ENCODE measurements at regions of chr1 and their contacts with region 1.

Region 1: DNA sequence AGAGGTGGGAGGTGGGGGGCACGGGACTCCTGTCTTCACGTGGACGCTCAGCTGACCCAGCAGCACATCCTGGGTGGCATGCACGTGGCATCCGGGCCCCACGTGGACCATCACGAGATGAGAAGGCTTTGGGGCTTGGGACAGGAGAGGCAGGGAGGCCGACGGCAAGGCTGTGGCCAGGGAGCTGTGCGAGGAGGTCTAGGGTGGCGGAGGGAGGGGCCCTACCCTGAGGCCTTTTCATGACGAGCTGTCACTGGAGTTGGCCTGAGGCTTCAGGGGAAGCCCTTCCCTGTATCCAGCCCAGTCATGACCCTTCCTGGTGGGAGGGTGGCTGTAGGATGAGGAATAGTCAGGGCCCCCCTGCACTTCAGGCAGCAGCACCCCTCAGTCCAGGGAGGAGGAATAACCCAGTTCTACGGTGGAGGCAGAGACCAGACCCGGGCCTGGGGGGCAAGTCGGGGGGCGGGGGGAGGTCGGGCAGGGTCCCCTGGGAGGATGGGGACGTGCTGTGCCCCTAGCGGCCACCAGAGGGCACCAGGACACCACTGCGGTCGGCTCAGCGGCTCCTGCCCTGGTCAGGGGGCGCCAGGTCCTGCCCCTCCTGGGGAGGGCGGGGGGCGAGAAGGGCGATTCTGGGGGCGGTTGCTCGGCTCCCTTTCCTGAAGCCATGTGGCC is 2.0 kb upstream of the PERM1 start:
- DNase-seq: peak; percentile 73
- ATAC-seq: peak; percentile 93
- H3K4me3 Mint-ChIP-seq: no peak overlapping the region
- H3K27ac Mint-ChIP-seq: no peak overlapping the region
- H3K4me1 Mint-ChIP-seq: no peaks in the 10 kb centered on the region
- H3K27me3 Mint-ChIP-seq: peaks cover 27% of the 10 kb centered on the region
- CTCF ChIP-seq: peak; percentile 99

Region 2: DNA sequence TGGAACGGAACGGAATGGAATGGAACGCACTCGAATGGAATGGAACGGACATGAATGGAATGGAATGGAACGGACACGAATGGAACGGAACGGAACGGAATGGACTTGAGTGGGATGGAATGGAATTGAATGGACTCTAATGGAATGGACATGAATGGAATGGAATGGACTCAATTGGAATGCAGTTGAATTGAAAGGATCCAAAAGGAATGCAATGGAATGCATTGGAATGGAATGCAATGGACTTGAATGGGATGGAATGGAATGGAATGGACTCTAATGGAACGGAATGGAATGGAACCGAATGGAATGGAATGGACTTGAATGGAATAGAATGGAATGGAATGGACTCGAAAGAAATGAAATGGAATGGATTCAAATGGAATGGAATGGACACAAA is 195.1 kb before region 1 on chr1:
- CTCF ChIA-PET with region 1: no interaction called
- POLR2A ChIA-PET with region 1: no interaction called
- intact Hi-C with region 1: no loop called
- DNase-seq: no peak
- ATAC-seq: no peak
- H3K4me3 Mint-ChIP-seq: no peak overlapping the region
- H3K27ac Mint-ChIP-seq: no peak overlapping the region
- H3K4me1 Mint-ChIP-seq: no peaks in the 10 kb centered on the region
- H3K27me3 Mint-ChIP-seq: no peaks in the 10 kb centered on the region
- CTCF ChIP-seq: no peak

Region 3: GRCh38 chr1:995665-996633 is 12.0 kb after region 1 on chr1:
- CTCF ChIA-PET with region 1: interaction called, 37 read pairs
- POLR2A ChIA-PET with region 1: interaction called, 4 read pairs
- intact Hi-C with region 1: no loop called
- DNase-seq: no peak
- ATAC-seq: no peak
- H3K4me3 Mint-ChIP-seq: no peak overlapping the region
- H3K27ac Mint-ChIP-seq: no peak overlapping the region
- H3K4me1 Mint-ChIP-seq: peaks cover 26% of the 10 kb centered on the region
- H3K27me3 Mint-ChIP-seq: peaks cover 28% of the 10 kb centered on the region
- CTCF ChIP-seq: no peak

Region 4: DNA sequence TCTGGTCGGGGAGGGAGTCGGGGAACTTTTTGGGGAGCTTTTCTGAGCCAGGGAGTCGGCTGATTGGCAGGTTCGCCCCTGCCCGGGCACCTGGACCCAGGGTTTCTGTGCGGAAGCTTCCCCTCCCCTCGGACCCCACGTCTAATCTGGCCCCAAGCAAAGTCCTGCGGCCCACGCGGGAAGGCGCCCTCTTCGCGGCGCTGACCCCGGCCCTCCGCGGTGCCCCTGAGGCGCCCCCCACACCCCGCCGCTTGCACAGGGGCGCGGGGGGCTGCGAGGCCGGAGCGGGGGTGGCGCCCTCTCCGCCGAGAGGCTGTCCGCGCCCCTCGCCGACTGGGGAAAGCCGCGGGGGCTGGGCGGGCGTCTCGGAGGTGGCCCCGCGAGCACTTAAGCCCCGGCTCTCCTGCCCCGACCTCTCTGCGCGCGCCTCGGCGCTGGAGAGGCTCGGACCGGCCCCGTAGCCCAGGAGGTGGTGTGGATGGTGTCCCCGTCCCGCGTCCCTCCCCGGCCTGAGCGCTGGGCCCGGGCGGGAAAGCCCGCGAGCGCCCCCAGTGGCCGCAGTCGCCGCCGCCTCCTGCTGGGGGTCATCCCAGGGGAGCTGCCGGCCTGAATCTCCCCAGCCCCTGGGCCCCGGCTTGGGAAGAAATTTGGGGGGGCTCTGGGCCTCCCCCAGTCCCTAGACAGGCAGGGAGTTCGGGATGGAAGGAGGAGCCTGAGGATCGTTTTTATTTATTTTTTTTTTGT is 17.7 kb after region 1 on chr1:
- CTCF ChIA-PET with region 1: interaction called, 37 read pairs
- POLR2A ChIA-PET with region 1: interaction called, 3 read pairs
- intact Hi-C with region 1: no loop called
- DNase-seq: peak; percentile 76
- ATAC-seq: peak; percentile 57
- H3K4me3 Mint-ChIP-seq: peak overlapping the region; percentile 65
- H3K27ac Mint-ChIP-seq: no peak overlapping the region
- H3K4me1 Mint-ChIP-seq: peaks cover 15% of the 10 kb centered on the region
- H3K27me3 Mint-ChIP-seq: peaks cover 41% of the 10 kb centered on the region
- CTCF ChIP-seq: peak; percentile 97

Region 5: DNA sequence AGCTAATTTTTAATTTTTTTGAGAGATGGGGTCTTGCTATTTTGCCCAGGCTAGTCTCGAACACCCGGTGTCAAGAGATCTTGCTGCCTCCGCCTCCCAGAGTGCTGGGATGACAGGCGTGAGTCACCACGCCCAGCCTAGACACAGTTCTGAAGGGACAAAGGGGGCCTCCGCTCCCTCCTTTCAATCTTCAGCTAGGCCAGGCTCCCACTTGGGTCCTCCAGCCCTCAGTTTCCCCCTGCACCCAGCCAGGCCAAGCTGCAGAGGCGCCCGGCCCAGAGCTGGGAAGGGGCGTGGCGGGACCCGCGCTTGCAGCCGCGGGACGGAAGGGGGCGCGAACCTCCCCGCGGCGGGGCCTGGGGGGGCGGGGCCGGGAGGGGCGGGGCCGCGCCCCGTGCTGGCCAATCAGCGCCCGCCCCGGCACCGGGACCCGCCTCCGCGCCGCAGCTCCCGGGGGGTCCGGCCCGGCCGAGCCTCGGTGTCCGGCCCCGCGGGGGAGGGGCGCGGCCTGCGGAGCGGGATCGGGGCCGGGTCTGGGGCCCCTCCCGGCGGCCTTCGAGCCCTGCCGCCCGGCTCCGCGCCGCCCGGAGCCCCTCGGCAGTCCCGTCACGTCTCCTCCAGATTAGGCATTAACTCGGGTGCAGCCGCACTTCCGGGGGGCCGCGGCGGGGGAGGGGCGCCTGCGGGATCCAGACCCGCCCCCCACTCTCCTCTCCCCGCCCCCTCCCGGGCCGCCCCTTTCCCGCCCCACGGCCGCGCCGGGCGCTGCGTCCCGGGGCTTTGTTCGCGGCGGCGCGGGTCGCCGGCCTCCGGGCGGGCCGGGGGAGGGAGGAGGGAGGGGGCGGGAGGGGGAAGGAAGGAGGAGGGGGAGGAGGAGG is 35.4 kb after region 1 on chr1:
- CTCF ChIA-PET with region 1: interaction called, 15 read pairs
- POLR2A ChIA-PET with region 1: interaction called, 3 read pairs
- intact Hi-C with region 1: no loop called
- DNase-seq: peak; percentile 81
- ATAC-seq: peak; percentile 79
- H3K4me3 Mint-ChIP-seq: peak overlapping the region; percentile 66
- H3K27ac Mint-ChIP-seq: no peak overlapping the region
- H3K4me1 Mint-ChIP-seq: peaks cover 19% of the 10 kb centered on the region
- H3K27me3 Mint-ChIP-seq: no peaks in the 10 kb centered on the region
- CTCF ChIP-seq: peak; percentile 48

Region 6: GRCh38 chr1:1212780-1213344 is 228.9 kb after region 1 on chr1:
- CTCF ChIA-PET with region 1: no interaction called
- POLR2A ChIA-PET with region 1: no interaction called
- intact Hi-C with region 1: no loop called
- DNase-seq: peak; percentile 74
- ATAC-seq: peak; percentile 3
- H3K4me3 Mint-ChIP-seq: peak overlapping the region; percentile 76
- H3K27ac Mint-ChIP-seq: peak overlapping the region; percentile 52
- H3K4me1 Mint-ChIP-seq: peaks cover 53% of the 10 kb centered on the region
- H3K27me3 Mint-ChIP-seq: no peaks in the 10 kb centered on the region
- CTCF ChIP-seq: no peak

Region 7: GRCh38 chr1:1291548-1292441 is 307.9 kb after region 1 on chr1:
- CTCF ChIA-PET with region 1: interaction called, 16 read pairs
- POLR2A ChIA-PET with region 1: no interaction called
- intact Hi-C with region 1: no loop called
- DNase-seq: peak; percentile 84
- ATAC-seq: peak; percentile 87
- H3K4me3 Mint-ChIP-seq: no peak overlapping the region
- H3K27ac Mint-ChIP-seq: no peak overlapping the region
- H3K4me1 Mint-ChIP-seq: peaks cover 2% of the 10 kb centered on the region
- H3K27me3 Mint-ChIP-seq: no peaks in the 10 kb centered on the region
- CTCF ChIP-seq: peak; percentile 69

Measured in activated CD8-positive, alpha-beta T cell treated with anti-CD3 and anti-CD28 coated beads for 36 hours (primary cell).